ENCODE measurements at regions of chr20 and their contacts with region 1.

Region 1: GRCh38 chr20:32207626-32208498 is at the starts of genes PLAGL2 and POFUT1:
- DNase-seq: peak; percentile 90
- H3K4me3 Mint-ChIP-seq: peak within 1 kb of the TSS; percentile 100
- H3K27ac Mint-ChIP-seq: peak within 1 kb of the TSS; percentile 93
- H3K4me1 Mint-ChIP-seq: peaks cover 81% of the 10 kb centered on the region
- H3K27me3 Mint-ChIP-seq: no peaks in the 10 kb centered on the region
- total RNA-seq, gene PLAGL2: 123 and 126 TPM in 2 replicates
- total RNA-seq, gene POFUT1: 69.0 and 73.0 TPM in 2 replicates

Region 2: GRCh38 chr20:31822421-31823330 is 385.2 kb before region 1 on chr20:
- intact Hi-C with region 1: no loop called
- DNase-seq: peak; percentile 58
- H3K4me3 Mint-ChIP-seq: no peak overlapping the region
- H3K27ac Mint-ChIP-seq: no peak overlapping the region
- H3K4me1 Mint-ChIP-seq: no peaks in the 10 kb centered on the region
- H3K27me3 Mint-ChIP-seq: peaks cover 1% of the 10 kb centered on the region

Region 3: DNA sequence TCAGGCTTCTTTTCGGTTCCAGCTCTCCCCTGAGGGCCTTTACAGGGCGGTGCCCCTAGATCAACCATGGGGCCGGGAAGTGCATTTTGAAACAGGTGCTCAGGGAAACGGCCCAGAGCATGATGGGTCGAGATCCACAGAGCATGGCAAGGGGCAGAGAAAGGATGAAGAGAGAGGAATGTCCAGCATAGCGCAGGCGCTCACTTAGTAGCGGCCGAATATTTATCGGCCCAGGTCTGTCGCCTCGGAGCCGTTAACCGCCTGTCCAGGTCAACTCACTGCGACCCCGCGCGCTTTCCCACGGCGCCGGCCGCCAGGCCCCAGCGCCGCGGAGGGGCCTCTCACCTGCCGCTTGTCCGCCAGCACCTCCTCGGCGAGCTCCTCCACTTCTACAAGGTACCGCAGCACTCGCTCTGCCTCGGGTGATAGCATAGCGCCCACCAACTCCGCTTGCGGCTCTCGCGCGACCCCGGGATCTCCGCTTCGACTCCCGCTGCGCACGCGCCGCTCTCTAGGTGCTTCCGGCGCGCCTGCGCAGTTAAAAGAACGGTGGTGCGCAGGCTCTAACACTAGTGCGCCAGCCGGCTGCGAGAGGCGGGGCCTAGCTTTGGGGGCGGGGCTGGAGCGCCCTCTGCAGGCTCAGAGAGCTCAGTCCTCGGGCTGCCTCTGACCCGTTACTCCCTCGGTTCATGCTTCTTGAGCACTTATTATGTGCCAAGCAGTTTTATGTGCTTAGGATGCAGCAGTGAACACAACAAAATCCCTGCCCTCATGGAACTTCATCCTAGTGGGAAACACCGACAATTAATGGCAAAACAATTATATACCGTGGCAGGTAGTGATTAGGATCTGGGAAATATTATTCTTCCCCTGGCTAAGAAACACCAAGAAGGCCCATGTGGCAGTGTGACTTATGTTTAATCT is 256.1 kb before region 1 on chr20 and contains the start of gene PDRG1:
- intact Hi-C with region 1: loop called (anchors 5 kb)
- DNase-seq: peak; percentile 96
- H3K4me3 Mint-ChIP-seq: peak within 1 kb of the TSS; percentile 97
- H3K27ac Mint-ChIP-seq: peak within 1 kb of the TSS; percentile 95
- H3K4me1 Mint-ChIP-seq: peaks cover 28% of the 10 kb centered on the region
- H3K27me3 Mint-ChIP-seq: peaks cover 8% of the 10 kb centered on the region
- total RNA-seq, gene PDRG1: 20.0 and 20.5 TPM in 2 replicates

Region 4: DNA sequence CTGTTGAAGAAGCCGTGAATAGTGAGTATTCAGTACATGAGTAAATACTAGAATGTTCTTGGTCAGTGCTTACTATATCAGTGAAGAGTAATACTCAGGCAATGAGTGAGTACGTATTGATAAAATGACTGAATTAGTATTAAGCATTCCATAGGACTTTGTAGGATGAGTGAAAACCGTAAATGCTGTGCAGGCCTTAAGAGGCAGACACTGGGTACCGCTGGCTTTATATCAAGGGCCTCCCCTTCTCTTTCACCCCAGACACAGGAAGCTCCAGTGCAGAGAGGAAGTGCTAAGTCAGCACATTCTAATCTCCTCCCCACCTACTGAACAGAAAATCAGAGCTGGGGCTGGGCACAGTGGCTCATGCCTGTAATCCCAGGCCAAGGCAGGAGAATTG is 24.0 kb after region 1 on chr20:
- intact Hi-C with region 1: loop called (anchors 1 kb)
- DNase-seq: peak; percentile 31
- H3K4me3 Mint-ChIP-seq: peak overlapping the region; percentile 69
- H3K27ac Mint-ChIP-seq: peak overlapping the region; percentile 95
- H3K4me1 Mint-ChIP-seq: peaks cover 40% of the 10 kb centered on the region
- H3K27me3 Mint-ChIP-seq: no peaks in the 10 kb centered on the region

Region 5: DNA sequence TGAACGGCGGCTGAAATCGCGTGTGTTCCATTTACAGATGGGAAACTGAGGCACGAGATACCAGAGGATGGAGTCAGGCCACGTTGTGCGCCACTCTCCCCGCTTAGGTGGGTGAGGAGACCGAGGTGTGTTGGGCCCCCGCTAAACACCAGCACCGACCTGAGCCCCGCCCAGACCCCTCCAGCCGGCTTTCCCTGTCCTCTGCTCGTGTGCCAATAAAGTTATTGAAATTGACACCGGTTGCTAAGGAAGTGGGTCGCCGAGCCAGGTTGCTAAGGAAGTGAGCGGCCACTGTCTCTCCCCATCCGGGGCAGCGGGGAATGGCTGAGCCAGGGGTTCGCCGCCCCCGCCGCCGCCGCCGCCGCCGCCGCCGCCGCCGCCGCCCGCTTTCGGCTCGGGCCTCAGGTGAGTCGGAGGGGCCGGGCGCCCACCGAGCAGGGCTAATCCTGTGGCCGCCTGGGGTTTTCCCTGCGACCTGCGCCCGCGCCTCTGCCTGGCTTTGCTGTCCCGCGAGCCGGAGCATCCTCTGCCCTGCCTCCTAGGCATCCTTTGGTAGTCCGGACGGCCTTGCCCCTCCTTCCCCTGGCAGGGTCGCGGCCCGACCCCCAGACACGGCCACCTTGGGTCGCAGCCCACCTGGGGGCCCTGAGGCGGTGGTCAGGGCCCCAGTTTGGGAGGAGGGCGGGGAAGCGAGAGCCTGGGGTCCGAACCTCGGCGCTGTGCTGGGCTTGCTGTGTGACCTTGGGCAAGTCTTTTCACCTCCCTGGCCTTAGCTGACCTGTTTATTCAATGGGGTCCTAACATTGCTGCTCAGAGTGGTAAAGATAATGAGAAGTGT is 69.7 kb after region 1 on chr20 and contains the start of gene KIF3B:
- intact Hi-C with region 1: loop called (anchors 1 kb)
- DNase-seq: peak; percentile 87
- H3K4me3 Mint-ChIP-seq: peak within 1 kb of the TSS; percentile 91
- H3K27ac Mint-ChIP-seq: peak within 1 kb of the TSS; percentile 84
- H3K4me1 Mint-ChIP-seq: peaks cover 49% of the 10 kb centered on the region
- H3K27me3 Mint-ChIP-seq: no peaks in the 10 kb centered on the region
- total RNA-seq, gene KIF3B: 38.1 and 39.1 TPM in 2 replicates

Region 6: GRCh38 chr20:32325706-32326503 is 118.0 kb after region 1 on chr20:
- intact Hi-C with region 1: no loop called
- DNase-seq: no peak
- H3K4me3 Mint-ChIP-seq: no peak overlapping the region
- H3K27ac Mint-ChIP-seq: peak overlapping the region; percentile 11
- H3K4me1 Mint-ChIP-seq: peaks cover 11% of the 10 kb centered on the region
- H3K27me3 Mint-ChIP-seq: no peaks in the 10 kb centered on the region

Region 7: GRCh38 chr20:32336918-32337347 is 129.1 kb after region 1 on chr20:
- intact Hi-C with region 1: loop called (anchors 1 kb)
- DNase-seq: no peak
- H3K4me3 Mint-ChIP-seq: no peak overlapping the region
- H3K27ac Mint-ChIP-seq: no peak overlapping the region
- H3K4me1 Mint-ChIP-seq: peaks cover 39% of the 10 kb centered on the region
- H3K27me3 Mint-ChIP-seq: no peaks in the 10 kb centered on the region

Region 8: DNA sequence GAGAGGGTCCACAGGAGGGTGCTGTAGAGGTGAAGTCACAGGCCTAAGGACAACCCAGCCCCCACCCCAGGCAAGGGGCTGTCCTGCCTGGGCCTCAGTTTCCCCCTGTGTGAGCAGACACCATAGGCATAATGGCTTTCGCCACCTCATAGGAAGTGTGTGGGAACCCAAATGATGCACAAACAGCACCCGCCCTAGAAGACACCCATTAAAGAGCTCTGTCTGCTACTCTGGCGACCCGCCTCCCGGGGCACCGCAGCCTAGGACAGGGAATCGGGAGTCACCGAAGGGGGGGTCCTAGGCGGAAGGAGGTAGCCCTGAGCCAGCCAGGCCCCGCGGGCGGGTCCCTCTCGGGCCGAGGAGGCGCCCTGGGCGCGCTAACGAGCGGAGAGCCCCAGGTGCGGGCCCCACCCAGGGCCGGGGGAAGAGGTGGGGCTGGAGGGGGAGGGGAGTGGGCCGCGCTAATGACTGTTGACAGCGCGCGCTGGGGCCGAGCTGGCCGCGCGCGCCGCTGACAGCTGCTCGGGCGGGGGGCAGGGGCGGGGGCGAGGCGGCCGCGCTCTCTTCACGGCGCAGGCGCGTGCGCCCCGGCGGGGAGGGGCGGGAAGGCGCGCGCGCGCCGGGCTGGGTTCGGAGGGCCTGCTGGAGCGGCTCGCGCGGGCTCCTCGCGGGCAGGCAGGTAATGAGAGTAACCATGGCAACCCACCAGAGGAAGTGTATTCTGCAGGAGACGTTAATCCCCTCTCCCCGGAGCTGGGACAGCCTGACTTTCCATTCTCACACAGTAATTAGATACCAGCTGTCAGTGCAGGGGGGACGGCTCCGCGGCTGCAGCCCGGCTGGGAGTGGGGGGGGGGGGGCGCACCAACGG is 328.3 kb after region 1 on chr20:
- intact Hi-C with region 1: loop called (anchors 5 kb)
- DNase-seq: peak; percentile 76
- H3K4me3 Mint-ChIP-seq: peak overlapping the region; percentile 76
- H3K27ac Mint-ChIP-seq: peak overlapping the region; percentile 90
- H3K4me1 Mint-ChIP-seq: peaks cover 84% of the 10 kb centered on the region
- H3K27me3 Mint-ChIP-seq: no peaks in the 10 kb centered on the region